Transverse colon (tissue), 4 donors: ENCODE measurements at regions of chr3 and their contacts with region 1.

Region 1: GRCh38 chr3:183884427-183885296 is at the start of gene PARL:
- DNase-seq: peak; percentile 97
- H3K4me3 ChIP-seq: peak within 1 kb of the TSS; percentile 84 to 96 (median 90)
- H3K27ac ChIP-seq: peak within 1 kb of the TSS; percentile 85 to 91 (median 86)
- H3K4me1 ChIP-seq: peaks cover 16 to 27% (median 22%) of the 10 kb centered on the region in 4 donors
- H3K27me3 ChIP-seq: no peaks in the 10 kb centered on the region
- CTCF ChIP-seq: peak; percentile 91 to 96 (median 93)
- EP300 ChIP-seq: no peak
- POLR2A ChIP-seq: peak; percentile 79
- total RNA-seq, gene PARL: 27.3 to 61.3 (median 48.8) TPM

Region 2: DNA sequence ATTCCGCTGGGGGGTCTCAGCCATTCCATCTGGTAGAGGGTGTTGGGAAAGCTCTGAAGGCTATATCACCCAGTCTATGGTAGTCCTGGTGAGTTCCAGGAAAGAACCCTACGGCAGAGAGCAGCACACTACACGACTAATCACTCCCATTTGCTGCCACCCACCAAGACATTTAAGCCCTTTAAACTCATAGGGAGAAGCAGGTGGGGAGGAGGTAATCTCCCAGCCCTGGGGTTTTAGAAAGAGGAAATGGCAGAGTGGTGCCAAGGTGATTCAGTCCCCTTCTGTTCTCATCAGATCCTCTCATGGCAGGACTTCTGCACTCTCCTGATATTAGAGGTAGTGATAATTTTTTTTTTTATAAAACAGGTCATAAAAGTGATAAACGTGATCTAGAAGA is 334.2 kb after region 1 on chr3:
- in situ Hi-C with region 1: no loop called
- intact Hi-C with region 1: no loop called
- DNase-seq: no peak
- H3K4me3 ChIP-seq: no peak overlapping the region
- H3K27ac ChIP-seq: no peak overlapping the region
- H3K4me1 ChIP-seq: no peaks in the 10 kb centered on the region
- H3K27me3 ChIP-seq: peaks cover 25% of the 10 kb centered on the region
- CTCF ChIP-seq: no peak
- EP300 ChIP-seq: no peak
- POLR2A ChIP-seq: no peak

Region 3: DNA sequence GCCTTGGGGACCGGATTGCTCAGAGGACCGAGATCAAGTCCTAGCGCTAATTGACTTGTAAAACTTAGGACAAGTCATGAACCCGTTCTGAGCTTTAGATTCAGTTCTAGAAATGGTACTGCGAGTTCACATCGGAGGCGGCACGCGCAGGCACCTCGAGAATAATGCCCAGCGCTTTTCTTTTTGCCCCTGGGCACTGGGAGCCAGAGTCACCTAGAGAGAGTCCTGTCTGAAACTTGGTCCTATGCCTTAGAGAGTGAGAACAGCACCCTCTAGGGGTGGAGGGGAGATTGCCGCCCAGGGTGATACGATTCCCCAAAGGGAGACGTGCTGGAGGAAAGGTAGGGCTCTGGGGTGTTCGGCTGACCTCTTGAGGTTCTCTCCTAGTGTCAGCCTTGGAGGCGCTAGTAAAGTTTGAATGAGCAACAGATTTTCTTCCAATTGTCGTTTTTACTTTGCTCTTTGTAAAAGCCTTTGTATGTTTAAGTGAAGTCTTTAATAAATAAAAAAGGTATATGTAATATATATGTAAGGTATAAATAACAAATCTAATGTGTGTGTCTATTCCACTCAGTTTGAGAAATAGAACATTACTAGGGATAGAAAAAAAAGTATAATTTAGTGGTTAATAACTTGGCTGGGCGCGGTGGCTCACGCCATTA is 365.6 kb after region 1 on chr3:
- in situ Hi-C with region 1: loop called (anchors 25 kb)
- intact Hi-C with region 1: no loop called
- DNase-seq: peak; percentile 95
- H3K4me3 ChIP-seq: peak overlapping the region; percentile 42 to 89 (median 66)
- H3K27ac ChIP-seq: peak overlapping the region; percentile 82 to 89 (median 88)
- H3K4me1 ChIP-seq: peaks cover 10 to 19% (median 15%) of the 10 kb centered on the region in 4 donors
- H3K27me3 ChIP-seq: no peaks in the 10 kb centered on the region
- CTCF ChIP-seq: peak; percentile 87 to 95 (median 92)
- EP300 ChIP-seq: no peak
- POLR2A ChIP-seq: no peak